ENCODE measurements at regions of chr7 and their contacts with region 1.

Region 1: DNA sequence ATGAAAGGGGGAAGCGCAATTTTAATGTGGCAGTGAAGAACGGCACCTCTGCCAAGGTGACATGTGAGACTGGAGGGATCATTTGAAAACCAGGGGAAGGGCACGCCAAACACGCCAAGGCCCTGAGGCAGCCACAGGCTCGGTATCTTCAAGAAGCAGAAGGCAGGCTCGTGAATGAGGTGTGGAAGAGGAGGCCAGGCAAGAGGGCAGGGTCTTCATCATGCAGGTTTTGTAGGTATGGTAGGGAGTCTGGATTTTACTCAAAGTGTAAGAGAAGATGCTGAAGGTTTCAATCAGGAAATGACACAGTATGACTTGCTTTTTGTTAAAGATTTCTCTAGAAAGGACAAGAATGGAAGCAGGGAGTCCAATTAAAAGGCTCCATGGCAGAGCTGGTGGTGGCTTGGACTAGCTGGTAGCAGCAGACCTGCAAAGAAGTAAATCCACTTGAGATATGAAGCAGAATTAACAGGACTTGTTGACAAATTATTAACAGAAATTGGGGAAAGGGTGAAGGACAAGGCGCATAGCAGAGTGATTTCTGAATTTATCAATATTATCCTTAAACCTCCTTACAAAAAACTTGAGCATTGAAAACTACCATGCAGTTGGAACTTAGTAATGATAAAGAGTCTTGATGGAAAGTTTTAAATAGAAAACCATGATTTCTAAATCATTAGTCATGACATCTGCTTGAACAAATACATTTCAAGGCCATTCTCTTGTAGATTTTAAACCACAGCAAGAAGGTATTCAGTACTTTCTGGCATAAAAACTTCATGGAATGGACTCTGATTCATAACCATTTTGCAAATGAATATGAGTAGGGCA is 70.4 kb downstream of the COA1 start:
- DNase-seq: peak; percentile 81
- ATAC-seq: peak; percentile 80
- H3K4me3 ChIP-seq: peak overlapping the region in 1 of 3 experiments; percentile 31; a peak in 1 of 6 replicates
- H3K27ac ChIP-seq: peak overlapping the region; percentile 94
- H3K4me1 ChIP-seq: peaks cover 58% of the 10 kb centered on the region
- H3K27me3 ChIP-seq: no peaks in the 10 kb centered on the region
- CTCF ChIP-seq: no peak
- EP300 ChIP-seq: peak in 1 of 2 experiments; percentile 78; a peak in 1 of 4 replicates
- POLR2A ChIP-seq: no peak
- RAD21 ChIP-seq: no peak

Region 2: DNA sequence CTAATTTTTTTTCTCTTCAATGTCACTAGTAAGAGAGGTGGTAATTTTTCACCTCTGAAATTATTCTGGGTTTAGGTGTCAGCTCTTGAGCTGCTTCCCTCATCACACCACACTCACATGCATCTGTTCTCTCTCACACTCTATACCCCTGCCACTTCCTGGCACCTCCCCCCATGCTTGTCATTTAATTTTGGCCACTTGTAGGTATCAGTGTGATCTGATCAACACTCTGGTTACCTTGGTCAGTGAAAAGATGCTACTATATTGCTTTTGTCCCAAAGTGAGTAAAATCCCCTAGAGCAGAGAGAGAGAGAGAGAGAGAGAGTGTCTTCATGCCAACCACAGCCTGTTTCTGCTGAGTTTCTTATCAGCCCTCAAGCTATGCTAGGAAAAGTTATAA is 33.5 kb before region 1 on chr7:
- CTCF ChIA-PET with region 1: no interaction called
- POLR2A ChIA-PET with region 1: no interaction called
- in situ Hi-C with region 1: no loop called
- intact Hi-C with region 1: no loop called
- DNase-seq: no peak
- ATAC-seq: no peak
- H3K4me3 ChIP-seq: no peak overlapping the region
- H3K27ac ChIP-seq: no peak overlapping the region
- H3K4me1 ChIP-seq: peaks cover 3% of the 10 kb centered on the region
- H3K27me3 ChIP-seq: no peaks in the 10 kb centered on the region
- CTCF ChIP-seq: no peak
- EP300 ChIP-seq: no peak
- POLR2A ChIP-seq: no peak; a peak in 1 of 4 replicates
- RAD21 ChIP-seq: no peak

Region 3: GRCh38 chr7:43639858-43640491 is 19.0 kb before region 1 on chr7:
- CTCF ChIA-PET with region 1: no interaction called
- POLR2A ChIA-PET with region 1: interaction called, 5 read pairs
- in situ Hi-C with region 1: no loop called
- intact Hi-C with region 1: loop called (anchors 2 kb)
- DNase-seq: peak; percentile 98
- ATAC-seq: peak; percentile 96
- H3K4me3 ChIP-seq: no peak overlapping the region; a peak in 1 of 6 replicates
- H3K27ac ChIP-seq: peak overlapping the region; percentile 97
- H3K4me1 ChIP-seq: peaks cover 64% of the 10 kb centered on the region
- H3K27me3 ChIP-seq: no peaks in the 10 kb centered on the region
- CTCF ChIP-seq: no peak
- EP300 ChIP-seq: peak; percentile 89 to 91
- POLR2A ChIP-seq: no peak
- RAD21 ChIP-seq: no peak

Region 4: GRCh38 chr7:43693687-43694398 is 34.9 kb after region 1 on chr7:
- CTCF ChIA-PET with region 1: no interaction called
- POLR2A ChIA-PET with region 1: no interaction called
- in situ Hi-C with region 1: no loop called
- intact Hi-C with region 1: loop called (anchors 5 kb)
- DNase-seq: peak; percentile 22
- ATAC-seq: peak; percentile 69
- H3K4me3 ChIP-seq: no peak overlapping the region
- H3K27ac ChIP-seq: peak overlapping the region; percentile 26
- H3K4me1 ChIP-seq: peaks cover 60% of the 10 kb centered on the region
- H3K27me3 ChIP-seq: no peaks in the 10 kb centered on the region
- CTCF ChIP-seq: no peak
- EP300 ChIP-seq: no peak
- POLR2A ChIP-seq: no peak
- RAD21 ChIP-seq: no peak

Region 5: GRCh38 chr7:43711503-43711902 is 52.6 kb after region 1 on chr7:
- CTCF ChIA-PET with region 1: no interaction called
- POLR2A ChIA-PET with region 1: no interaction called
- in situ Hi-C with region 1: no loop called
- intact Hi-C with region 1: no loop called
- DNase-seq: no peak
- ATAC-seq: no peak
- H3K4me3 ChIP-seq: no peak overlapping the region
- H3K27ac ChIP-seq: no peak overlapping the region
- H3K4me1 ChIP-seq: peaks cover 11% of the 10 kb centered on the region
- H3K27me3 ChIP-seq: no peaks in the 10 kb centered on the region
- CTCF ChIP-seq: no peak
- EP300 ChIP-seq: no peak
- POLR2A ChIP-seq: no peak
- RAD21 ChIP-seq: no peak